Activated CD8-positive, alpha-beta memory T cell treated with anti-CD3 and anti-CD28 coated beads, Interleukin-2, amount 10 ng/mL, durations not matched to agents 7 days and 5 days (primary cell): ENCODE measurements at regions of chr3 and their contacts with region 1.

Region 1: DNA sequence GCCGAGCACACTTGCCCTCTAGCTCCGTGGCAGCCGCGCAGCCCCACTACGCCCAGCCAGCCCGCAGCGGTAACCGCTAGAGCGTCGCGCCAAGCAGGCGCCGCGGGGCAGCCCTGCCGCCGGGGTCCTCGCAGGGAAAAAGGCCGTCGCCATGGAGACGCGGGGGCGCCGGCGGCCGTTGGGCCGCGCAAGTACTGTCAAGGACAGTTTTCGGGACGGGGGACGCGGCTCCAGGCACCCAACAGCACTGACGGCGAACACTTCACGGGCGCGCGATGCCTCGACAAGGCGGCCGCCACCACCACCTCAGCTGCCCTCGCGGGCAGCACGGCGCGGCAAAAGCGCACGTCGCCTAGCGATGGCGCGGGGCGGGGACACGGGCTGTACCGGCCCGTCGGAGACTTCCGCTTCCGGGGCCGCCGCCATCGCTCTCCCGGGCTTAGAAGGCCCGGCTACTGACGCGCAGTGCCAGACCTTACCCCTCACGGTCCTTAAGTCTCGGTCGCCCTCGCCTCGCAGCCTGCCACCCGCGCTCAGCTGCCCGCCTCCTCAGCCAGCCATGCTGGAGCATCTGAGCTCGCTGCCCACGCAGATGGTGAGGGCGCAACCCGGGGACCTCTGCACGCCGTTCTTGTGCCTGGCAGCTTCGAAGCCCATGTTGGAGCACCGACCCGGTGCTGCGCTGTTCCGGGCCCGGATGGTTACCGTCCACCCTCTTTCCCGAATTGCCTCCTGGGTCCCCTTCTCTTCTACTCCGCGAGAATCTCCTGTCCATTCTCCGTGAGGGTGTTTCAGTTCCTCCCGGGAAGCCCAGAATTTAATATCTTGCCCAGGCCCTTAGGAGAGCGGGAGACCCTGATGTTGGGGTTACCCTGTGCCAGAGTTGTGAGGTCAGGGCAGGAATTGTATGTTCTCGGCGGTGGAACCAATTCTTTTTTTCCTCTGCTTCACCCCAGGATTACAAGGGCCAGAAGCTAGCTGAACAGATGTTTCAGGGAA is at the starts of genes GLT8D1 and SPCS1:
- DNase-seq: peak; percentile 89
- ATAC-seq: peak; percentile 94
- H3K4me3 Mint-ChIP-seq: peak within 1 kb of the TSS; percentile 95
- H3K27ac Mint-ChIP-seq: peak within 1 kb of the TSS; percentile 91
- H3K4me1 Mint-ChIP-seq: peaks cover 41% of the 10 kb centered on the region
- H3K27me3 Mint-ChIP-seq: no peaks in the 10 kb centered on the region
- total RNA-seq, gene GLT8D1: 37.0 to 46.3 TPM
- total RNA-seq, gene SPCS1: 87.3 to 106 TPM

Region 2: GRCh38 chr3:52694528-52695189 is 11.3 kb before region 1 on chr3:
- CTCF ChIA-PET with region 1: interaction called, 18 read pairs
- DNase-seq: no peak
- ATAC-seq: no peak
- H3K4me3 Mint-ChIP-seq: no peak overlapping the region
- H3K27ac Mint-ChIP-seq: no peak overlapping the region
- H3K4me1 Mint-ChIP-seq: peaks cover 26% of the 10 kb centered on the region
- H3K27me3 Mint-ChIP-seq: no peaks in the 10 kb centered on the region

Region 3: GRCh38 chr3:52845157-52845556 is 139.2 kb after region 1 on chr3:
- CTCF ChIA-PET with region 1: no interaction called
- DNase-seq: no peak
- ATAC-seq: no peak
- H3K4me3 Mint-ChIP-seq: no peak overlapping the region
- H3K27ac Mint-ChIP-seq: no peak overlapping the region
- H3K4me1 Mint-ChIP-seq: peaks cover 14% of the 10 kb centered on the region
- H3K27me3 Mint-ChIP-seq: no peaks in the 10 kb centered on the region

Region 4: DNA sequence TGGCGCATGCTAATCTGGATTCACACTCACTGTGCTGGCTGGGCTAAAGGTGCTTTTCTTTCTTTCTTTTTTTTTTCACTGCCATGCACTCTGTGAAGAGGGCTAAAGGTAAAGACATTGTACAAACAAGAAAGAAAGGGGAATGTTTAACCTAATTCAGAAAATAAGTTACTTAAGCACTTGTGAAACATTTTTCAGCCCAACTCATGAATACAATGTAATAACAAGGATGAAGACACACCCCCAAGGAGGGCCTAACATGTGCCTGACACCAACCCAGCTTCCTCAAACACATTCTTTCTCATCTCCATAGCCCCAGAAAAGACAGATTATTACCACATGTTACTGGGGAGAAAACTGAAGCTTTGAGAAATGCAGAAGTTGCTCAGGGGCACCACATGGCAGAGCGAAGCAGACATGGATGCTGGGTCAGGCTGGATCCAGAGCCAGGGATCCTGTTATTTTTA is 185.7 kb after region 1 on chr3:
- CTCF ChIA-PET with region 1: no interaction called
- DNase-seq: no peak
- ATAC-seq: no peak
- H3K4me3 Mint-ChIP-seq: peak overlapping the region; percentile 78
- H3K27ac Mint-ChIP-seq: peak overlapping the region; percentile 94
- H3K4me1 Mint-ChIP-seq: peaks cover 63% of the 10 kb centered on the region
- H3K27me3 Mint-ChIP-seq: no peaks in the 10 kb centered on the region